ENCODE measurements at regions of chr12 and their contacts with region 1.

Region 1: GRCh38 chr12:96780330-96780729 is 126.7 kb upstream of the NEDD1 start:
- DNase-seq: no peak
- H3K4me3 ChIP-seq: no peak overlapping the region
- H3K27ac ChIP-seq: no peak overlapping the region
- H3K4me1 ChIP-seq: no peaks in the 10 kb centered on the region
- H3K27me3 ChIP-seq: no peaks in the 10 kb centered on the region
- CTCF ChIP-seq: no peak
- POLR2A ChIP-seq: no peak

Region 2: DNA sequence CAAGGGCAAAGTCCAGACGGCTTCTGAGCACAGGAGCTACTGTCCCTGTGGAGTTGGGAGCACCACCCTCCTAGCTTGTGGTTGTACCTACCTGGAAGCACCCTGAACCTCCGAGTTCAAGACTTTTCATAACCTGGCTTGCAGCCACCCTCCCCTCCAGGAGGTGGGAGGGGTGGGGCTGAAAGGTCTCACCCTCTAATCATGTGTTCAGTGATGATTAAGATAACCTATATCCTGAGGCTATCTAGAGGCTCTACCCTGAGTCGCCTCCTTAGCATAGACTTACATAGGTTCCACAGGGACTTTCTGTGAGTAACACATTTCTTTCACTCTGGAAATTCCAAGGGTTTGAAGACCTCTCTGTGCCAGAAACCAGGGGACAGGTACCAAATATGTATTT is 144.5 kb before region 1 on chr12:
- intact Hi-C with region 1: no loop called
- DNase-seq: no peak
- H3K4me3 ChIP-seq: no peak overlapping the region
- H3K27ac ChIP-seq: no peak overlapping the region
- H3K4me1 ChIP-seq: no peaks in the 10 kb centered on the region
- H3K27me3 ChIP-seq: no peaks in the 10 kb centered on the region
- CTCF ChIP-seq: no peak
- POLR2A ChIP-seq: no peak

Region 3: DNA sequence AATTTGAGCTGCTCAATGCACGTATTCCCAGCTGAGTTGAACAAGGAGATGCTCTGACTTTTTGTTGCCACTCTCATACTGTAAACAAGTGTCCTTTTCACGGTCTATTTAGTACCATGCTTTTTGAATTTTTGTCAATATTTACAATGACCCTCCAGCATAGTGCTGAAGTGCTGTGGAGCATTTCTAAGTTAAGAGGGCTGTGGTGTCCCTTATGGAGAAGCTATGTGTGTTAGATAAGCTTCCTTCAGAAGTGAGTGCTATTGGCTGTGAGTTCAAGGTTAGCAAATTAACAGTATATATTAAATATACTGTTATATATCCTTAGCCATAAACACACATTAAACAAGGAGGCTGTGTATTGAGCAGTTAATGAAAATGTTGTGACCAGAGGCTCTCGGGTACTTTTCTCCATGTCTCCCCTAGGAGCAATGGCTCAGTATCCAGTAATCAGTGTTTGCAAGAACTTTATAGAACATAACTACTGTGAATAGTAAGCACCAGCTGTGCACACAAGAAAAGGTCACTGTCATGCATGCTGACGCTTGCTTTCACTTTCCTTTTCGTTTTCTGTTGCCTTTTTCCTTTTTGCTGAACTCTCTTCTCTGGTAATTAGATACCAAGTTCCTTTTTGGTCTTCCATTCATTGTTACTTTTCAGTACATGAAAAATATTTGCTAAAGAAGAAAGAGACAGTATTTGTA is 60.5 kb before region 1 on chr12:
- intact Hi-C with region 1: no loop called
- DNase-seq: no peak
- H3K4me3 ChIP-seq: peak overlapping the region; percentile 34 to 36
- H3K27ac ChIP-seq: no peak overlapping the region
- H3K4me1 ChIP-seq: peaks cover 6% of the 10 kb centered on the region
- H3K27me3 ChIP-seq: no peaks in the 10 kb centered on the region
- CTCF ChIP-seq: no peak
- POLR2A ChIP-seq: no peak

Region 4: DNA sequence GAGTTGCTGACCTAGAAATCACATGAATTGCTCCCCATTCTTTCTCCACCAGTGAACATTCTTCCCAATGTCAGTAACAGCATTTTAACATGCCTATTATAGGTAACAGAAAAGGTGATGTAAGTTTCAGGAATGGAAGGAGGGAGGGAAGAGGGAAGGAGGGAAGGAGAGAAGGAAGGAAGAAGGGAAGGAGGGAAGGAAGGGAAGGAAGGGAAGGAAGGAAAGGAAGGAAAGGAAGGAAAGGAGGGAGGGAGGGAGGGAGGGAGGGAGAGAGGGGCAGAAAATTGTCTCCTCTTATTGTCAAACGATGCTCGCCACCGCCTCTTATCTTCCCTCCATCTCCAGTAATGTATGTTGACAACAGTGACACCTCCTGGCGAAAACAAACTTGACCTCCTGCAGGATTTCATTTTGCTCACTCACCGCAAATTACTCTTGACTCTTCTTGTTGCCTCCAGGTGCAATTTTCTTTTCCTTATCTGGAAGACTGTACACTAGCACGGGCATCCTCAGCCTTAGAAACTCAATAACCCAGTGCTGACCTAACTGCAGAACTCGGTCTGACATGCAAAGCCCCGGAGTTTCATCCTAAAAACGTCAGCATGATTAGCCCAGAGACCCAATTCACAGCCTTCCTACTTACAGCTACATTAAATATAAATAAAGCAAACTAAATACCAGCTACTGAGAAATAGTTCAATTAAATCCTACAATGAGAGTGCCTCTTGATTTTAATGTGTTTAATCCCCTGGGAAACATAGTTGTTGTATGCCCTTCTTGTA is 1222.6 kb after region 1 on chr12:
- intact Hi-C with region 1: no loop called
- DNase-seq: no peak
- H3K4me3 ChIP-seq: no peak overlapping the region
- H3K27ac ChIP-seq: no peak overlapping the region
- H3K4me1 ChIP-seq: no peaks in the 10 kb centered on the region
- H3K27me3 ChIP-seq: no peaks in the 10 kb centered on the region
- CTCF ChIP-seq: no peak
- POLR2A ChIP-seq: no peak

Region 5: GRCh38 chr12:98483621-98484503 is 1703.5 kb after region 1 on chr12:
- intact Hi-C with region 1: loop called (anchors 5 kb)
- DNase-seq: no peak
- H3K4me3 ChIP-seq: no peak overlapping the region
- H3K27ac ChIP-seq: no peak overlapping the region
- H3K4me1 ChIP-seq: no peaks in the 10 kb centered on the region
- H3K27me3 ChIP-seq: no peaks in the 10 kb centered on the region
- CTCF ChIP-seq: no peak
- POLR2A ChIP-seq: no peak